IMR-90 (cell line): ENCODE measurements at regions of chr10 and their contacts with region 1.

Region 1: GRCh38 chr10:89516149-89516832 is 19.1 kb downstream of the SLC16A12 start:
- DNase-seq: peak; percentile 98
- ATAC-seq: peak; percentile 61
- H3K4me3 ChIP-seq: no peak overlapping the region
- H3K27ac ChIP-seq: no peak overlapping the region
- H3K4me1 ChIP-seq: peaks cover 24% of the 10 kb centered on the region
- H3K27me3 ChIP-seq: no peaks in the 10 kb centered on the region
- CTCF ChIP-seq: no peak
- POLR2A ChIP-seq: no peak
- RAD21 ChIP-seq: no peak

Region 2: GRCh38 chr10:88467835-88468485 is 1048.3 kb before region 1 on chr10:
- CTCF ChIA-PET with region 1: no interaction called
- POLR2A ChIA-PET with region 1: no interaction called
- dilution Hi-C with region 1: no loop called
- in situ Hi-C with region 1: no loop called
- intact Hi-C with region 1: no loop called
- DNase-seq: peak; percentile 12
- ATAC-seq: no peak
- H3K4me3 ChIP-seq: no peak overlapping the region
- H3K27ac ChIP-seq: no peak overlapping the region
- H3K4me1 ChIP-seq: peaks cover 1% of the 10 kb centered on the region; the same call in 1 of the 2 replicates
- H3K27me3 ChIP-seq: peaks cover 2% of the 10 kb centered on the region; the same call in 1 of the 2 replicates
- CTCF ChIP-seq: no peak
- POLR2A ChIP-seq: no peak
- RAD21 ChIP-seq: no peak

Region 3: GRCh38 chr10:89481662-89482061 is 34.6 kb before region 1 on chr10:
- CTCF ChIA-PET with region 1: no interaction called
- POLR2A ChIA-PET with region 1: no interaction called
- dilution Hi-C with region 1: no loop called
- in situ Hi-C with region 1: no loop called
- intact Hi-C with region 1: loop called (anchors 5 kb)
- DNase-seq: peak; percentile 93
- ATAC-seq: peak; percentile 79
- H3K4me3 ChIP-seq: no peak overlapping the region
- H3K27ac ChIP-seq: peak overlapping the region; percentile 24; the same call in 1 of the 2 replicates
- H3K4me1 ChIP-seq: peaks cover 12% of the 10 kb centered on the region
- H3K27me3 ChIP-seq: no peaks in the 10 kb centered on the region
- CTCF ChIP-seq: no peak
- POLR2A ChIP-seq: no peak
- RAD21 ChIP-seq: no peak

Region 4: GRCh38 chr10:89553064-89553734 is 36.9 kb after region 1 on chr10:
- CTCF ChIA-PET with region 1: no interaction called
- POLR2A ChIA-PET with region 1: no interaction called
- dilution Hi-C with region 1: no loop called
- in situ Hi-C with region 1: no loop called
- intact Hi-C with region 1: loop called (anchors 5 kb)
- DNase-seq: peak; percentile 97
- ATAC-seq: peak; percentile 88
- H3K4me3 ChIP-seq: no peak overlapping the region
- H3K27ac ChIP-seq: no peak overlapping the region
- H3K4me1 ChIP-seq: peaks cover 4% of the 10 kb centered on the region; the same call in 1 of the 2 replicates
- H3K27me3 ChIP-seq: no peaks in the 10 kb centered on the region
- CTCF ChIP-seq: no peak
- POLR2A ChIP-seq: no peak
- RAD21 ChIP-seq: no peak

Region 5: GRCh38 chr10:90148116-90148855 is 632.0 kb after region 1 on chr10:
- CTCF ChIA-PET with region 1: no interaction called
- POLR2A ChIA-PET with region 1: no interaction called
- dilution Hi-C with region 1: no loop called
- in situ Hi-C with region 1: no loop called
- intact Hi-C with region 1: no loop called
- DNase-seq: peak; percentile 22
- ATAC-seq: peak; percentile 60; the same call in 1 of the 2 replicates
- H3K4me3 ChIP-seq: no peak overlapping the region
- H3K27ac ChIP-seq: no peak overlapping the region
- H3K4me1 ChIP-seq: no peaks in the 10 kb centered on the region
- H3K27me3 ChIP-seq: no peaks in the 10 kb centered on the region
- CTCF ChIP-seq: peak; percentile 47
- POLR2A ChIP-seq: no peak
- RAD21 ChIP-seq: peak; percentile 49